ENCODE measurements at regions of chr11 and their contacts with region 1.

Region 1: DNA sequence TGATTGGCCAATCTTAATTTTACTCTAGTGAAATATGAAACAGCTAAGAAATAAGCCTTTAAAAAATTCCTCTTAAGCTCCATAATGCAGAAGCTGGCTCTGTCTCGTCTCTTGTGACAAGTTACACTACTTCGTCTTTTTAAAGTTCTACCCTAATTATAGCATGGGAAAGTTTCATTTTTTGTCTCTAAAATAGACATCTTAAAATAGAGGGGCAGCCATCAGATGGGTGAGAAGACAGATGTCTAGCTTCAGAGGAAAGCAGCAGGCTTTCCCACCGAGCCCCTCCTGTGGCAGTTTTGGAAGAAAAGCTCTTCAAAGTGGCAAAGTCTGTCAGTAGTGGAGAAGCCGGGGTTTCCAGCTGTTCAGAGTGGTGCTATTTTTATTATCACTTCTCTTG is 39.5 kb downstream of the XRRA1 start:
- DNase-seq: no peak
- H3K4me3 ChIP-seq: no peak overlapping the region
- H3K27ac ChIP-seq: no peak overlapping the region
- H3K4me1 ChIP-seq: no peaks in the 10 kb centered on the region
- H3K27me3 ChIP-seq: no peaks in the 10 kb centered on the region
- CTCF ChIP-seq: no peak

Region 2: GRCh38 chr11:74860743-74861142 is 48.6 kb before region 1 on chr11:
- CTCF ChIA-PET with region 1: no interaction called
- dilution Hi-C with region 1: loop called (anchors 5 kb)
- in situ Hi-C with region 1: no loop called
- intact Hi-C with region 1: no loop called
- DNase-seq: no peak
- H3K4me3 ChIP-seq: no peak overlapping the region
- H3K27ac ChIP-seq: no peak overlapping the region
- H3K4me1 ChIP-seq: no peaks in the 10 kb centered on the region
- H3K27me3 ChIP-seq: no peaks in the 10 kb centered on the region
- CTCF ChIP-seq: no peak

Region 3: GRCh38 chr11:75241036-75241905 is 331.9 kb after region 1 on chr11:
- CTCF ChIA-PET with region 1: no interaction called
- dilution Hi-C with region 1: no loop called
- in situ Hi-C with region 1: loop called in 1 of 2 experiments (anchors 25 kb)
- intact Hi-C with region 1: no loop called
- DNase-seq: peak; percentile 76
- H3K4me3 ChIP-seq: peak overlapping the region; percentile 31 to 60 (median 58)
- H3K27ac ChIP-seq: no peak overlapping the region
- H3K4me1 ChIP-seq: peaks cover 11% of the 10 kb centered on the region
- H3K27me3 ChIP-seq: peaks cover 11% of the 10 kb centered on the region
- CTCF ChIP-seq: peak; percentile 51 to 75

Measured in mammary epithelial cell (primary cell).